B cell (primary cell): ENCODE measurements at regions of chr2 and their contacts with region 1.

Region 1: GRCh38 chr2:231648587-231649174 is 56.0 kb downstream of the TEX44 start:
- DNase-seq: peak; percentile 77
- ATAC-seq: peak; percentile 97
- H3K4me3 ChIP-seq: no peak overlapping the region
- H3K4me3 Mint-ChIP-seq: no peak overlapping the region
- H3K27ac ChIP-seq: no peak overlapping the region
- H3K27ac Mint-ChIP-seq: peak overlapping the region; percentile 74
- H3K4me1 ChIP-seq: peaks cover 0 to 10% of the 10 kb centered on the region in 2 donors
- H3K4me1 Mint-ChIP-seq: peaks cover 7% of the 10 kb centered on the region
- H3K27me3 ChIP-seq: no peaks in the 10 kb centered on the region
- H3K27me3 Mint-ChIP-seq: no peaks in the 10 kb centered on the region
- CTCF ChIP-seq: peak; percentile 79

Region 2: GRCh38 chr2:231662028-231662810 is 13.5 kb after region 1 on chr2:
- CTCF ChIA-PET with region 1: interaction called, 8 read pairs
- POLR2A ChIA-PET with region 1: interaction called, 5 read pairs
- intact Hi-C with region 1: loop called (anchors 2 kb)
- DNase-seq: peak; percentile 100
- ATAC-seq: peak; percentile 76
- H3K4me3 ChIP-seq: peak overlapping the region; percentile 23 to 58 (median 49)
- H3K4me3 Mint-ChIP-seq: peak overlapping the region; percentile 79
- H3K27ac ChIP-seq: peak overlapping the region; percentile 90 to 98
- H3K27ac Mint-ChIP-seq: peak overlapping the region; percentile 96
- H3K4me1 ChIP-seq: peaks cover 44 to 56% of the 10 kb centered on the region in 2 donors
- H3K4me1 Mint-ChIP-seq: peaks cover 58% of the 10 kb centered on the region
- H3K27me3 ChIP-seq: no peaks in the 10 kb centered on the region
- H3K27me3 Mint-ChIP-seq: no peaks in the 10 kb centered on the region
- CTCF ChIP-seq: no peak

Region 3: GRCh38 chr2:231680992-231681853 is 32.5 kb after region 1 on chr2:
- CTCF ChIA-PET with region 1: interaction called, 239 read pairs
- POLR2A ChIA-PET with region 1: interaction called, 14 read pairs
- intact Hi-C with region 1: no loop called
- DNase-seq: peak; percentile 64
- ATAC-seq: peak; percentile 69
- H3K4me3 ChIP-seq: peak overlapping the region in 4 of 5 experiments; percentile 33 to 61 (median 52)
- H3K4me3 Mint-ChIP-seq: peak overlapping the region; percentile 87
- H3K27ac ChIP-seq: peak overlapping the region in 1 of 2 donors; percentile 71
- H3K27ac Mint-ChIP-seq: peak overlapping the region; percentile 87
- H3K4me1 ChIP-seq: peaks cover 20 to 54% of the 10 kb centered on the region in 2 donors
- H3K4me1 Mint-ChIP-seq: peaks cover 44% of the 10 kb centered on the region
- H3K27me3 ChIP-seq: no peaks in the 10 kb centered on the region
- H3K27me3 Mint-ChIP-seq: no peaks in the 10 kb centered on the region
- CTCF ChIP-seq: no peak

Region 4: GRCh38 chr2:231687133-231687852 is 38.6 kb after region 1 on chr2:
- CTCF ChIA-PET with region 1: interaction called, 21 read pairs
- POLR2A ChIA-PET with region 1: no interaction called
- intact Hi-C with region 1: no loop called
- DNase-seq: peak; percentile 84
- ATAC-seq: peak; percentile 91
- H3K4me3 ChIP-seq: no peak overlapping the region
- H3K4me3 Mint-ChIP-seq: peak overlapping the region; percentile 14
- H3K27ac ChIP-seq: no peak overlapping the region
- H3K27ac Mint-ChIP-seq: peak overlapping the region; percentile 57
- H3K4me1 ChIP-seq: peaks cover 15 to 36% of the 10 kb centered on the region in 2 donors
- H3K4me1 Mint-ChIP-seq: peaks cover 38% of the 10 kb centered on the region
- H3K27me3 ChIP-seq: no peaks in the 10 kb centered on the region
- H3K27me3 Mint-ChIP-seq: no peaks in the 10 kb centered on the region
- CTCF ChIP-seq: peak; percentile 70

Region 5: GRCh38 chr2:231786177-231786916 is 137.7 kb after region 1 on chr2 and contains the start of gene COPS7B:
- CTCF ChIA-PET with region 1: no interaction called
- POLR2A ChIA-PET with region 1: no interaction called
- intact Hi-C with region 1: loop called (anchors 1 kb)
- DNase-seq: peak; percentile 89
- ATAC-seq: peak; percentile 53
- H3K4me3 ChIP-seq: peak within 1 kb of the TSS; percentile 52 to 92 (median 85)
- H3K4me3 Mint-ChIP-seq: peak within 1 kb of the TSS; percentile 85
- H3K27ac ChIP-seq: peak within 1 kb of the TSS; percentile 38 to 73
- H3K27ac Mint-ChIP-seq: peak within 1 kb of the TSS; percentile 90
- H3K4me1 ChIP-seq: peaks cover 32% of the 10 kb centered on the region in 2 donors
- H3K4me1 Mint-ChIP-seq: peaks cover 70% of the 10 kb centered on the region
- H3K27me3 ChIP-seq: no peaks in the 10 kb centered on the region
- H3K27me3 Mint-ChIP-seq: no peaks in the 10 kb centered on the region
- CTCF ChIP-seq: peak; percentile 64
- total RNA-seq, gene COPS7B: 52.7 and 58.5 TPM in 2 replicates